Pancreas (tissue), 10 donors: ENCODE measurements at regions of chr5 and their contacts with region 1.

Region 1: DNA sequence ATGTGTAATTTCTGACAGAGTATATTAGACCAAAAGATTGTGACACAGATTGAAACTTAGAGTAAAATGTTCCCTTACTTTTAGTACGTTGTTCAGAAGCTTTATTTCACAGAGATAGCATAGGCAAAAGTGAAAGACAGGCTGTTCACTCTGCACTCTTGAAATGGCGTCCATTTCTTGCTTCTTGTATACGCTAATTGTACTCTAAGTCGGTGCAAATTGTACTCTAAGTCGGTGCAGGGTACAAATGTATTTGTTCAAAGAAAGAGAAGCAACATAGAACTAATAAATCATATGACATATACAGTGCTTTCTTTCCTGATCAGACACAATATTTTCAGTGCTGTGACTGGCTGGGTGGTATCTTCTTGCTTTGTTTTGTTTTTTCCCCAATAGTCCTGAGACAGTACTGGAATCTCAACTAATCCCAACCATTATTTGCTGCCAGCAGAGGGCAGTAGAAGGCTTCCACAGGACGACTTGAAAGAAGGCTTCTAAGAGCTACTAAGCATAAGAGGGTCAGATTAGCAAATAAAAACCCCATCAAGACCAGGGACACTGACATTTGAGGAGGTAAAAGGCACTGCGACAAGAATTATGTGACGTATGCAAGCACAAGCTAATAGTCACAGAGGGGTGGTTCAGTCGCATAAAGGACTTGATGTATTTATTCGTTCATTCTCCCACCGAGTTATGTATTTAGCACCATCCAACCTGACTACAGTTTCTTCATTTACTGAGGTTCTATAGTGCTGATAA is 831.8 kb downstream of the TAF11L14 start:
- DNase-seq: peak in 3 of 6 donors; percentile 13 to 61 (median 43)
- ATAC-seq: peak in 3 of 4 donors; percentile 51 to 90 (median 85)
- H3K4me3 ChIP-seq: no peak overlapping the region
- H3K27ac ChIP-seq: no peak overlapping the region
- H3K4me1 ChIP-seq: no peaks in the 10 kb centered on the region
- H3K27me3 ChIP-seq: no peaks in the 10 kb centered on the region
- CTCF ChIP-seq: peak in 3 of 4 donors; percentile 38 to 59 (median 51)

Region 2: GRCh38 chr5:17481378-17481777 is 984.6 kb before region 1 on chr5:
- intact Hi-C with region 1: no loop called
- DNase-seq: no peak
- ATAC-seq: no peak
- H3K4me3 ChIP-seq: no peak overlapping the region
- H3K27ac ChIP-seq: no peak overlapping the region
- H3K4me1 ChIP-seq: no peaks in the 10 kb centered on the region
- H3K27me3 ChIP-seq: peaks cover 0 to 9% (median 0%) of the 10 kb centered on the region in 4 donors
- CTCF ChIP-seq: no peak

Region 3: DNA sequence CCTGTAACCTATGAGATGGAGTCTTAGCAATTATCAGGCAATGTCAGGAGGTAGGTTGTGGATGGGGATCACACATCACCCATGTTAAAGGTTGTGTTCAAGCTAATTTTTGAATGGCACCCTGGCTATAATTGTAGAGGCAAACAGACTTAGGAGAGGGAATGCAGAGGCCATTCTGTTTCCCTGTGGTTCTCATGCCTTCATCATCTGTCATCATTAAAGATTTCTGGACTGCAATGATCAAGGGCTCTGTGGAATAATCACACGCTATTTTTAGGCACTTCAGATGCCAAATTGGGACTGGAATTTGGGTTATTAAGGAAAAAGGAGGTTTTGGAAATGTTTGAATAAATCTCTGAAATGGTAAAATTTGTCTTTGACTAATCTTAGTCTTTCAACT is 233.7 kb after region 1 on chr5:
- intact Hi-C with region 1: loop called in 1 of 3 experiments (anchors 10 kb)
- DNase-seq: no peak
- ATAC-seq: no peak
- H3K4me3 ChIP-seq: no peak overlapping the region
- H3K27ac ChIP-seq: no peak overlapping the region
- H3K4me1 ChIP-seq: no peaks in the 10 kb centered on the region
- H3K27me3 ChIP-seq: peaks cover 0 to 4% (median 0%) of the 10 kb centered on the region in 4 donors
- CTCF ChIP-seq: no peak